ENCODE measurements at regions of chr1 and their contacts with region 1.

Region 1: DNA sequence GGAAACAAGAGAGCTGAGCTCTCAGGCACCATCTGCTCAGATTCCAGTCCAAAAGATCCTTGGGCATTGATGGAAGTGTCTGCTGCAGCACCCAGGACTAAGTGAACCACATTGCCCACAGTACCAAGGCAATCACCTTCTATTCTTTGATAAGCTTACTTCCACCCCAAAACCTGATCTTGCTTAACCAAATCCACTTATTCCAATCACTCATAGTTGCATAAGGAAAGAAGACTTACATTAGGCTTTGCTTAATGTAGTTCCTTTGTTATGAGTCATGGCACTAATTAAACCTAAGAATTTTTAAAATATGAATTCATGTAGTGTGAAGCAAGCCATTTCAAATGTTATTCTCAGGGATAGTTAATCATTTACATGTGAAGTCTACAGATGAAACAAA is 84.5 kb downstream of the UCHL5 start:
- DNase-seq: peak; percentile 57
- H3K4me3 Mint-ChIP-seq: no peak overlapping the region
- H3K27ac Mint-ChIP-seq: no peak overlapping the region
- H3K4me1 Mint-ChIP-seq: peaks cover 14% of the 10 kb centered on the region
- H3K27me3 Mint-ChIP-seq: no peaks in the 10 kb centered on the region
- CTCF ChIP-seq: no peak

Region 2: DNA sequence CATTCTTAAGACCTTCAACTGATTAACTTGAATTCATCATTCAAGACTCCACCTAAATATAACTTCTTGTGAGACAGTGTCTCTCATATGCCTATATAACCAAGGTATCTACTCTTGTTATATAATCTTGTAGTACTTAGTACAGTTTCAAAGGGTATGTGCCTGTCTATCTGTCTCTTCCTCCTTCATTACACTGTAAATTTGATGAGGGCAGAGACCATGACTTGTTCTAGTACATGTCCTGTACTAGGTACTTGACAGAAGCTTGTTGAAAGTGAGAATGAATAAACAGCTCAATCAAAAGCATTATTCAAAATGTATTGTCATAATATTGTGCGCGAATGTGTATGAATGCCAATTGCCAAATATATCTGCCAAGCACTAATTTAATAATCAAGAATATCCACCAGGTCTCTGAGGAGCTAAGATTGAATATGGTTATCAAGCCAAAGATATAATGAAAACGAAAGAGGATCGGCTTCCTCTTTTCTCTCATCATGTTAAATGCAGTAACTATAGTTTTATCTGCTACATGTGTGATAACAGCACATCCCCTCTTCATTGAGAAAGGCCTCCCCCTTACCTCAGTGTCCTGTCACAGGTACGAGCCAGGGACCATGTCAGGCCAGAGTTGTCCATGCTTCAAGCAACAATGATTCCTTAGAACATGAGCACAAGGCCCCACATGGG is 32.8 kb before region 1 on chr1:
- CTCF ChIA-PET with region 1: interaction called, 10 read pairs
- POLR2A ChIA-PET with region 1: interaction called, 3 read pairs
- intact Hi-C with region 1: no loop called
- DNase-seq: no peak
- H3K4me3 Mint-ChIP-seq: no peak overlapping the region
- H3K27ac Mint-ChIP-seq: no peak overlapping the region
- H3K4me1 Mint-ChIP-seq: peaks cover 5% of the 10 kb centered on the region
- H3K27me3 Mint-ChIP-seq: no peaks in the 10 kb centered on the region
- CTCF ChIP-seq: no peak

Region 3: DNA sequence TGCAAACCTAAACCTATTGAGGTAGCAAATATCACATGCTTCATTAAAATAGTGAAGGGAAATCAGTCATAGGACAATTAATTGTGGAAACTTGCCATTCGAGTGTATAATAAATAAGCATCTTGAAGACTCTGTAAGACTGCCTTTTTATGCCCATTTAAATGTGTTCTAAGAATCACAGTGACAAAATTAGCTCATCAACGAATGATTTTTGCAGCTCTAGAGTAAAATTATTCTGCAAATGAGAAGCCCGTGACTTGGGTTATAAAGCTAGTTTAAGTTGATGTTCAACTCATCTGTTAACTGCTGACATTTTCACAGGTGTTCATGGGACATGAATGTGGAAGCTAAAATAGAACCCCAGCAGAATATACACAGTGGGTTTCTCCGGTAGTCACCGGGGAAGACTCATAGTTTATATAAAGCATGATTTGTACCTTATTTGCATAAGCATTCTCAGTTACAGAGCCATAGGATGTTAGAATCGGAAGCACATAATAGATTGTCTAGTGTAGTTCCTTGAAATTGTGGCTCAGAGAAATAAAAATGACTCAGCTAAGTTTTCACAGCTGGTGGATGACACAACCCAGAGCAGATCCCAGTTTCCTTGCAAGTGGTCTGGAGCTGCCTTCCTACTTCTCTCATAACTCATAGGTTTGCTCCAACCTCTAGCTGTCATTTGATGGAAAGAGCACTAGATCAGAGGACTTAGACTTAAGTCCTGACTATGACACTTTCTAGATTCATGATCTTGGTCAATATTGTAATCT is 22.8 kb before region 1 on chr1:
- CTCF ChIA-PET with region 1: no interaction called
- POLR2A ChIA-PET with region 1: interaction called, 13 read pairs
- intact Hi-C with region 1: no loop called
- DNase-seq: peak; percentile 85
- H3K4me3 Mint-ChIP-seq: no peak overlapping the region
- H3K27ac Mint-ChIP-seq: peak overlapping the region; percentile 56
- H3K4me1 Mint-ChIP-seq: peaks cover 14% of the 10 kb centered on the region
- H3K27me3 Mint-ChIP-seq: no peaks in the 10 kb centered on the region
- CTCF ChIP-seq: no peak

Region 4: GRCh38 chr1:193085263-193085662 is 110.6 kb after region 1 on chr1:
- CTCF ChIA-PET with region 1: no interaction called
- POLR2A ChIA-PET with region 1: no interaction called
- intact Hi-C with region 1: no loop called
- DNase-seq: no peak
- H3K4me3 Mint-ChIP-seq: no peak overlapping the region
- H3K27ac Mint-ChIP-seq: no peak overlapping the region
- H3K4me1 Mint-ChIP-seq: no peaks in the 10 kb centered on the region
- H3K27me3 Mint-ChIP-seq: no peaks in the 10 kb centered on the region
- CTCF ChIP-seq: no peak

Region 5: DNA sequence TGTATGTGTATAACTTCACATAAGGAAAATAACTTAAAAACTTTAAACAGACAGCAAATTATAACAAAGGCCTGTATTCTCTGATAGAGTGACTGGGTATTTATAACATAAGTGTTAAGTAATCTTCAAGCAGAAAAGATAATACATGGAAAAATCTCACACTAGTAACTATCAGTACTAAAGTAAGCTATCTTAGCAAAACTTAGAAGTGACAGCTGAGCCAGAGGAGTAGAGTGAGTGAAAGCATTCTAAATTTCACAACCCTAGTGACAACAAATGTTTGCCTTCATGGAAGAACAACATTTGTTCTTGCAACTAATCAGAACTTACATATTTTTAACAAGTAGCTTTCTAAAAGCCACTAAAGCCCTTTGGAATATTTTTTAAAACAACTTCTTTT is 286.2 kb after region 1 on chr1:
- CTCF ChIA-PET with region 1: no interaction called
- POLR2A ChIA-PET with region 1: no interaction called
- intact Hi-C with region 1: no loop called
- DNase-seq: no peak
- H3K4me3 Mint-ChIP-seq: no peak overlapping the region
- H3K27ac Mint-ChIP-seq: no peak overlapping the region
- H3K4me1 Mint-ChIP-seq: no peaks in the 10 kb centered on the region
- H3K27me3 Mint-ChIP-seq: no peaks in the 10 kb centered on the region
- CTCF ChIP-seq: no peak

Region 6: GRCh38 chr1:193275773-193276172 is 301.1 kb after region 1 on chr1:
- CTCF ChIA-PET with region 1: no interaction called
- POLR2A ChIA-PET with region 1: no interaction called
- intact Hi-C with region 1: no loop called
- DNase-seq: no peak
- H3K4me3 Mint-ChIP-seq: no peak overlapping the region
- H3K27ac Mint-ChIP-seq: no peak overlapping the region
- H3K4me1 Mint-ChIP-seq: peaks cover 7% of the 10 kb centered on the region
- H3K27me3 Mint-ChIP-seq: no peaks in the 10 kb centered on the region
- CTCF ChIP-seq: no peak

Measured in MCF 10A (cell line).